ENCODE measurements at regions of chr1 and their contacts with region 1.

Region 1: GRCh38 chr1:37486680-37487618 is 12.6 kb downstream of the ZC3H12A start:
- DNase-seq: peak; percentile 88
- ATAC-seq: peak; percentile 82

Region 2: GRCh38 chr1:37453647-37454046 is 33.3 kb before region 1 on chr1:
- intact Hi-C with region 1: loop called (anchors 2 kb)
- DNase-seq: no peak
- ATAC-seq: no peak

Region 3: GRCh38 chr1:37567023-37567422 is 80.1 kb after region 1 on chr1:
- intact Hi-C with region 1: no loop called
- DNase-seq: no peak
- ATAC-seq: no peak